B cell (primary cell): ENCODE measurements at regions of chr2 and their contacts with region 1.

Region 1: GRCh38 chr2:11446733-11447248 is 19.2 kb downstream of the E2F6 start:
- DNase-seq: peak; percentile 74
- ATAC-seq: peak; percentile 51
- H3K4me3 ChIP-seq: no peak overlapping the region
- H3K4me3 Mint-ChIP-seq: no peak overlapping the region
- H3K27ac ChIP-seq: no peak overlapping the region
- H3K27ac Mint-ChIP-seq: no peak overlapping the region
- H3K4me1 ChIP-seq: no peaks in the 10 kb centered on the region
- H3K4me1 Mint-ChIP-seq: no peaks in the 10 kb centered on the region
- H3K27me3 ChIP-seq: no peaks in the 10 kb centered on the region
- H3K27me3 Mint-ChIP-seq: no peaks in the 10 kb centered on the region
- CTCF ChIP-seq: peak; percentile 89

Region 2: DNA sequence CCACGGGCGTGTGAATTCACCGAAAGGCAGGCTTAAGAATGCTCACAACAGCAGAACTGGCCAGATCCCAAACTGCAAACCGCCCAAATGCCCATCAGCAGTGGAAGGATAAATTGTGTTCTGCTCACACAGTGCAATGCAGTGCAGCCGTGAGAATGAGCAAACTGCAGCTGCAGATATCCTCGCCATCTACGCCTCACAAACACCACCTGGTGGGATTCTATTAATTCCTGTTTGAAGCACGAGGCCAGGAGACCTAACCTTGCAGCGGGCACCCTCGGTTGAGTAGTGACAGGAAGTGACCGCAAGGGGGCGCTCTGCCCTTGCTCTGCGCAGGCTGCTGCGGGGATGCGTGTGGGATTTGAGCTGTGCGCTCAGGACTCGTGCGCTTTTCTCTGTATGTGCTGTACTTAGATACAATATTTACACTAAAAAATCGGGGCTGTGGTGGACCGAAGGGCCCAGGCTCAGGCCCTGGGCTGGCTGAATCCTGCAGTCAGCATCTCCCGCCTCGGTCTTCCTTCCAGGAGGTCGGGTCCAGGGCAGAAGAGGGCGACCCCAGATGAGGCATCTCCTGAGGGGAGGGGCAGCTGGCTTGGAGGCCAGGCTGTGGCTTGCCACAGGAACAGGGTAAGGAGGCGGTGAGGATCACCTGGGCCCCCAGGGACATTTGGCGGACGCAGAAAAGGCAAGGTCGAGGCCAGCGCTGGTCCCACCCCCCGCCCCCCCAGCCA is 614.4 kb before region 1 on chr2:
- CTCF ChIA-PET with region 1: no interaction called
- POLR2A ChIA-PET with region 1: no interaction called
- intact Hi-C with region 1: loop called (anchors 2 kb)
- DNase-seq: peak; percentile 82
- ATAC-seq: peak; percentile 84
- H3K4me3 ChIP-seq: no peak overlapping the region
- H3K4me3 Mint-ChIP-seq: peak overlapping the region; percentile 15
- H3K27ac ChIP-seq: no peak overlapping the region
- H3K27ac Mint-ChIP-seq: no peak overlapping the region
- H3K4me1 ChIP-seq: peaks cover 10 to 12% of the 10 kb centered on the region in 2 donors
- H3K4me1 Mint-ChIP-seq: peaks cover 8% of the 10 kb centered on the region
- H3K27me3 ChIP-seq: peaks cover 0 to 42% (median 8%) of the 10 kb centered on the region in 4 experiments
- H3K27me3 Mint-ChIP-seq: peaks cover 43% of the 10 kb centered on the region
- CTCF ChIP-seq: peak; percentile 98

Region 3: GRCh38 chr2:11411768-11412448 is 34.9 kb before region 1 on chr2:
- CTCF ChIA-PET with region 1: no interaction called
- POLR2A ChIA-PET with region 1: no interaction called
- intact Hi-C with region 1: no loop called
- DNase-seq: peak; percentile 22
- ATAC-seq: no peak
- H3K4me3 ChIP-seq: peak overlapping the region in 1 of 5 experiments; percentile 15
- H3K4me3 Mint-ChIP-seq: no peak overlapping the region
- H3K27ac ChIP-seq: no peak overlapping the region
- H3K27ac Mint-ChIP-seq: no peak overlapping the region
- H3K4me1 ChIP-seq: no peaks in the 10 kb centered on the region
- H3K4me1 Mint-ChIP-seq: no peaks in the 10 kb centered on the region
- H3K27me3 ChIP-seq: peaks cover 0 to 14% (median 5%) of the 10 kb centered on the region in 4 experiments
- H3K27me3 Mint-ChIP-seq: peaks cover 28% of the 10 kb centered on the region
- CTCF ChIP-seq: peak; percentile 34

Region 4: DNA sequence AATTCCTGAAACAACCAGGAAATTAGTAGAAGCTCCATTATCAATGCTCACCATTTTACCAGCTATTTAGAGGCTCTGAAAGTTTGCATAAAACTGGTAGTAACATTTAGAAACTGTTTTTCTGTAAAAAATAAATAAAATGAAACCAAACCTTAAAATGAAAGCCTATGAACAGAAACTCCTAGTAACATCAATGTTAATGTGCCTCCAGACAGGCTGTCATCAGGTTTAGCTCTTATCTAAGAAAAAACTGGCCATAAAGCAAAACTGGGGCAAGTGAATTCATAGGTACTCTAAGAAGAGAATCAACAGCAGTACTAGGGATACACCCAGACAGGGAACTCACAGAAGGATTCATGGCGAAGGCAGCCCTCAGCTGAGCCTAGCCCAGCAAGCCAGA is 11.1 kb after region 1 on chr2:
- CTCF ChIA-PET with region 1: interaction called, 28 read pairs
- POLR2A ChIA-PET with region 1: no interaction called
- intact Hi-C with region 1: no loop called
- DNase-seq: no peak
- ATAC-seq: no peak
- H3K4me3 ChIP-seq: no peak overlapping the region
- H3K4me3 Mint-ChIP-seq: no peak overlapping the region
- H3K27ac ChIP-seq: no peak overlapping the region
- H3K27ac Mint-ChIP-seq: no peak overlapping the region
- H3K4me1 ChIP-seq: no peaks in the 10 kb centered on the region
- H3K4me1 Mint-ChIP-seq: peaks cover 4% of the 10 kb centered on the region
- H3K27me3 ChIP-seq: no peaks in the 10 kb centered on the region
- H3K27me3 Mint-ChIP-seq: no peaks in the 10 kb centered on the region
- CTCF ChIP-seq: no peak